AG04450 (cell line): ENCODE measurements at regions of chr18 and their contacts with region 1.

Region 1: GRCh38 chr18:51051105-51051712 is 21.2 kb downstream of the SMAD4 start:
- DNase-seq: no peak
- H3K4me3 ChIP-seq: no peak overlapping the region
- H3K27ac ChIP-seq: no peak overlapping the region
- H3K27me3 ChIP-seq: no peaks in the 10 kb centered on the region
- CTCF ChIP-seq: peak; percentile 93

Region 2: DNA sequence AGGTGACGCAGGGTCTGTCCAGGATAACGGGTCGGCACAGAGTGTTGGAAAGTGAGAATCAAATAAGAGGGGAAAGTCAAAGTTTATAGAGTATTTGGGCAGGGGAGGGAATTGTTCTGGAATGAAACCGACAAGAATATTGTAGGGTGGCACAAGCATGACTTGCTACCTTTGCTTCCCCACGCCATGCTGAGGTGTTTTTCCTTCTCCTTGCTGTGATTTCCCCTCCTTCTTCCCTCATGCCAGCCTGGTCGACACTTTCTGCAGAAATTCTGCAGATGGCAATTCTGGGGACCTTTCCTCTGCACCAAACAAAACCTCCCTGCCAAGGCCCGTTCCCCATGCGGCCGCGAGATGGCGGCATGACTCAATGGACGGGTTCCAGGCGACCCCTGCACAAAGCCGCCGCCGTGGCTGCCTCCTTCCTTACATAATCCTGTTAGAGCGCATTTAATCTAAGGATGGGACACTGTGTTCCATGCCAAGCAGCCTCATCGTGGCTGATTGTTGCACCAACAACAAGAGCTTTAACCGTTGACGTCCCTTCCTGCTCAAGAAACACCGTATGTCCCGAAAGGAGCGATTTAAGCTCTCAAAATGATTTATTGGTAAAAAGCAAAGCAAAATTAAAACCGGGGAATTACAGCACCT is 231.4 kb before region 1 on chr18 and contains the start of gene MRO:
- CTCF ChIA-PET with region 1: interaction called, 23 read pairs
- POLR2A ChIA-PET with region 1: interaction called, 3 read pairs
- DNase-seq: peak; percentile 29
- H3K4me3 ChIP-seq: peak within 1 kb of the TSS; percentile 54
- H3K27ac ChIP-seq: no peak within 1 kb of the TSS
- H3K27me3 ChIP-seq: peaks cover 8% of the 10 kb centered on the region
- CTCF ChIP-seq: peak; percentile 98
- polyA plus RNA-seq, gene MRO: 0.06 and 0.27 TPM in 2 replicates

Region 3: GRCh38 chr18:50967714-50968661 is 83.2 kb before region 1 on chr18 and contains the start of gene ELAC1:
- CTCF ChIA-PET with region 1: interaction called, 6 read pairs
- POLR2A ChIA-PET with region 1: interaction called, 15 read pairs
- DNase-seq: peak; percentile 36
- H3K4me3 ChIP-seq: peak within 1 kb of the TSS; percentile 86
- H3K27ac ChIP-seq: peak within 1 kb of the TSS; percentile 95
- H3K27me3 ChIP-seq: no peaks in the 10 kb centered on the region
- CTCF ChIP-seq: no peak
- polyA plus RNA-seq, gene ELAC1: 5.9 and 9.1 TPM in 2 replicates

Region 4: DNA sequence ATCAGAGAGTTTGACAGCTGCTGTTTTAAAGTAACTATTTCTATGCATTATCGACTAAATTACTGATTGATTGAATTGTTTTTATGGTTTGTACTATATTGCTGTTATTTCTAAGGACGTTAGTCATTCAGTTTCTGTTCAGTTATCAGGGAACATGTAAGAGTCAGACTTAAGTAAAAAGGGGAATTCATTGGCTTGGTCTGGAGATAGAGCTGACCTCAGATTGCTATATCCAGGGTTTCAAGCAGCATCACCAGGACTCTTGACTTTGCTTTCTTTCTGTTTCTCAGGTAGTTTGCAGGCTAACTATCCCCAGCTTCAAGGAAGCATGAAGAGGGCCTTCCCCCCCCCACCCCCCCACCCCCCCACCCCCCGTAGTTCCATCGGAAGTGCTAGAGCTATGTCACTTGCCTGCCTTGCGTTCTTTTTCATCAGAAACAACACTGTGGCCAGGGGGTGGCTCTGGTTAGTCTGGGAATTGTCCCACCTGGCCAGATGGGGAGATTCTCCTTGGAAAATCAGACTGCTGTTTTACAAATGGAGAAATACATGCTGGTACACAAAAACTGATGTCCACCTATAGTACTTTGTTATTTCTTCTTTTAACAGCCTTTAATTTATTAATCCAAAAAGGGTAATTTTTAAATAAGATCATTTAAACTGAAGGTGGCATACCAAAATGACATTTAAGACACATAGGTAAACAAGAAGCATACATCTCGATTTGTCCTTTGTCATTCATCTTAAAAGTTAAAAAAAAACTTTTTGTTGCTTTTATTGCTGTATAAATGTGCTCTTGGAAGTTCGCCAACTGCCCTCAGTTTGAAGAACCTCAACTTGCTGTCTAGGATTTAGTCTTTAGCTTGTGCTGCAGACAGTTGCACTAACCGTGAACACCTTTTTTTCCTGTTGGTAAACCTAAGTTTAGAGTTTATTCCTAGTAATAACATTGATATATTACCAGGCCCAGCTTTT is 11.8 kb before region 1 on chr18:
- CTCF ChIA-PET with region 1: interaction called, 52 read pairs
- POLR2A ChIA-PET with region 1: no interaction called
- DNase-seq: no peak
- H3K4me3 ChIP-seq: no peak overlapping the region
- H3K27ac ChIP-seq: no peak overlapping the region
- H3K27me3 ChIP-seq: no peaks in the 10 kb centered on the region
- CTCF ChIP-seq: no peak

Region 5: DNA sequence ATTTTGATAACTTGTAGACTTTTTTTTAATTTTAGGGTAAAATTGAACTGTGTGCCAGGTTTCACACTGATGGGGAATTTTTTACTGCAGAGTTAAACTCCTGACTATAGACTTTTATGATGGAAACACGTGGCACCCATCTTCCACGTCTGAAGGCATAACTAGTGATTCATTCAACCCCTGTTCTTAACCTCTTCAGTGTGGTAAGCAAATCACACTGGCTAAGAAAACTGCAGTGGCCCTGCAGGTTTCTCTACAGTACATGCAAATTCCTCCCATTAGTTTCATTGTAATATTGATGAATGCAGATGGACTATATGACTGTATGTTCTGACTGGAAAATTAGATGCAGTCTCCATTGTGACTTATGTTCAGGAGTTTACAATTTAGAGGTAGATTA is 26.0 kb after region 1 on chr18:
- CTCF ChIA-PET with region 1: interaction called, 10 read pairs
- POLR2A ChIA-PET with region 1: no interaction called
- DNase-seq: no peak
- H3K4me3 ChIP-seq: no peak overlapping the region
- H3K27ac ChIP-seq: no peak overlapping the region
- H3K27me3 ChIP-seq: no peaks in the 10 kb centered on the region
- CTCF ChIP-seq: no peak